ENCODE measurements at regions of chr11 and their contacts with region 1.

Region 1: DNA sequence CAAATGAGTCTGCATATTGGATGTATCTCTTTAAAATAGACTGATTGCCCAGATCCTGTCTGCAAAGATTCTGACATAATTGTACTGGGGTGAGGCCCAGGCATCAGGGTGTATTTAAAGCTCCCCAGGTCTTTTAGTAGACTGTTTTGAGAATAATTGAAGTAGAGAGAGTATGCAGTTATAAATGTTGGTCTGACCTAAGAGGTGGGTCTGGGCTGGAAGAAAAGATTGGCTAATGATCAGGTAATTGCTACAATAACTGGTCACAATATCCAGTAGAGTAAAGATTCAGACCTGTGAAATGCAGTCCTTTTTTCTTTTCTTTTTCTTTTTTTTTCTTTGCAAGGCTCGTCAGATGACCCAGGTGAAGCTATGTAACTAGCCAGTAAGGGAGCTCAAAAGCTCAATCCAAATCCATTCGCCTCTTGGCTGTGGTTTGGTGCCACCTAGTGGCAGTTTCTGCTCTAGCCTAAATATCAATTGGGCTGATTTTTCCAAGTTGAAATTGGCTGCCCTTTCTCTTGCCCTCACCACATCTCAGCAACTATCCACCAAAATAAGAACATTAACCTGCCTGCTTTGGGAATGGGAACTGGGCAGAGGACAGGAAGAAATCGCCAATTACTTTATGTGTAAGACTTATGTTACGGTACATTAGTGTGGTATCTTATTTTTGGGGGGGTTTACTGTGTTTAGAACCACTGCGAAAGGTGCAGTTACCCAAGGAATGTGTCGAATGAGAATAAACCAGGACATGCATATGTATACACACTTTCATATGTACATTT is 45.9 kb downstream of the ZNF143 start:
- DNase-seq: peak; percentile 37 to 60
- ATAC-seq: peak; percentile 65 to 86 (median 76)
- H3K4me3 ChIP-seq: no peak overlapping the region
- H3K27ac ChIP-seq: no peak overlapping the region
- H3K4me1 ChIP-seq: peaks cover 0 to 9% (median 0%) of the 10 kb centered on the region in 9 donors
- H3K27me3 ChIP-seq: no peaks in the 10 kb centered on the region
- CTCF ChIP-seq: peak; percentile 75 to 94 (median 91)

Region 2: GRCh38 chr11:9160166-9160565 is 346.5 kb before region 1 on chr11:
- intact Hi-C with region 1: loop called in 1 of 10 experiments (anchors 10 kb)
- DNase-seq: no peak
- ATAC-seq: no peak
- H3K4me3 ChIP-seq: no peak overlapping the region
- H3K27ac ChIP-seq: peak overlapping the region in 2 of 10 donors; percentile 17 to 57
- H3K4me1 ChIP-seq: peaks cover 0 to 38% (median 0%) of the 10 kb centered on the region in 9 donors
- H3K27me3 ChIP-seq: no peaks in the 10 kb centered on the region
- CTCF ChIP-seq: no peak

Region 3: GRCh38 chr11:9170450-9170849 is 336.2 kb before region 1 on chr11:
- intact Hi-C with region 1: loop called in 2 of 10 experiments (anchors 10 kb)
- DNase-seq: no peak
- ATAC-seq: peak in 1 of 8 donors; percentile 48
- H3K4me3 ChIP-seq: no peak overlapping the region
- H3K27ac ChIP-seq: no peak overlapping the region
- H3K4me1 ChIP-seq: peaks cover 0 to 20% (median 0%) of the 10 kb centered on the region in 9 donors
- H3K27me3 ChIP-seq: no peaks in the 10 kb centered on the region
- CTCF ChIP-seq: no peak

Region 4: GRCh38 chr11:9428706-9429105 is 78.0 kb before region 1 on chr11:
- intact Hi-C with region 1: no loop called
- DNase-seq: no peak
- ATAC-seq: no peak
- H3K4me3 ChIP-seq: no peak overlapping the region
- H3K27ac ChIP-seq: no peak overlapping the region
- H3K4me1 ChIP-seq: no peaks in the 10 kb centered on the region
- H3K27me3 ChIP-seq: no peaks in the 10 kb centered on the region
- CTCF ChIP-seq: no peak

Measured in heart right ventricle (tissue), 16 donors.